ENCODE measurements at regions of chr12 and their contacts with region 1.

Region 1: DNA sequence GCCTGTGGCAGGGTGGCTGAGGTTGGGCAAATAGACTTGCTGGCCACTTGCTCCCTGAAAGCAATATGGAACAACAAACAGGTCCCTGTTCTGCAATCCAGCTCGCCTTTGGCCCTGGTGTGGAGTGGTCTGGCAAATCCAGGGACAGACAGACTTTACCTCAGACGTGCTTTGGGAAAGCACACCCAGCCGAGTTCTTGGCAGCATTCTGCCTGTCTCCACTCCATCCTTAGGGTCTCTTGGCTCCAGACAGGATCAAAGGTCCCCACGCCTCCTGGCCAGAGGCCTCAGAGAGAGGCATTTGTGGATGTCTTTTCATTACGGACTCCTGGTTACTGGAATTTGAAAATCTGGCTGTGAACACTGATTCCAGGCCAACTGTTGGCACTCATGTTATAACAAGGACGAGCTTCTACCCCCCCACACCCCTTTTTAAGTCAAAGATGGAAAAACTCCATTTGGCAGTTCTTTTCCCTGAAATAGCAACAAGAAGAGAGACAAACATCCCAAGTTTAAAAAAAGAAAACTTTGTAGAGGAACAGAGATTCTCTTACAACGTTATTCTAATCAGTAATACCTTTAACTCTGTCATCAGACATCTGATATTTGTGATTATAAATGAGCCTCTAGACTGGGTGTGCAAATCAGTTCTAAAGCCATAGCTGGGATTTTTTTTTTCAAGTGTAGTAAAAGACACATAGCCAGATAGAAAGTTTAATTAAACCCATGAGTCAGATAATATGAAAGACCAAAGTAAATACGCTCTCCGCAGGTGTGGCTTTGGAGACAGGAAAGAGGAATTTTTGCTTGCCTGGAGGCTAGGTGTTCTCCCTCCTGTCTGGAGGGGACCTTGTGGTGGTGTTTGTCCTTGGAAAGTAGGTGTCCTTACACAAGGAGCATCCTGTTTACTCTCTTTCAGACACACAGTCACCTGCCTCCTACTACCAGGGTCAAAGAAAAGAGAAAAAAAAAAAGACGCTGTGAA is 60.7 kb downstream of the GALNT8 start:
- DNase-seq: no peak
- ATAC-seq: no peak
- H3K4me3 ChIP-seq: no peak overlapping the region
- H3K4me3 Mint-ChIP-seq: no peak overlapping the region
- H3K27ac ChIP-seq: no peak overlapping the region
- H3K27ac Mint-ChIP-seq: no peak overlapping the region
- H3K4me1 ChIP-seq: no peaks in the 10 kb centered on the region
- H3K4me1 Mint-ChIP-seq: no peaks in the 10 kb centered on the region
- H3K27me3 ChIP-seq: no peaks in the 10 kb centered on the region
- H3K27me3 Mint-ChIP-seq: peaks cover 11% of the 10 kb centered on the region
- CTCF ChIP-seq: no peak

Region 2: DNA sequence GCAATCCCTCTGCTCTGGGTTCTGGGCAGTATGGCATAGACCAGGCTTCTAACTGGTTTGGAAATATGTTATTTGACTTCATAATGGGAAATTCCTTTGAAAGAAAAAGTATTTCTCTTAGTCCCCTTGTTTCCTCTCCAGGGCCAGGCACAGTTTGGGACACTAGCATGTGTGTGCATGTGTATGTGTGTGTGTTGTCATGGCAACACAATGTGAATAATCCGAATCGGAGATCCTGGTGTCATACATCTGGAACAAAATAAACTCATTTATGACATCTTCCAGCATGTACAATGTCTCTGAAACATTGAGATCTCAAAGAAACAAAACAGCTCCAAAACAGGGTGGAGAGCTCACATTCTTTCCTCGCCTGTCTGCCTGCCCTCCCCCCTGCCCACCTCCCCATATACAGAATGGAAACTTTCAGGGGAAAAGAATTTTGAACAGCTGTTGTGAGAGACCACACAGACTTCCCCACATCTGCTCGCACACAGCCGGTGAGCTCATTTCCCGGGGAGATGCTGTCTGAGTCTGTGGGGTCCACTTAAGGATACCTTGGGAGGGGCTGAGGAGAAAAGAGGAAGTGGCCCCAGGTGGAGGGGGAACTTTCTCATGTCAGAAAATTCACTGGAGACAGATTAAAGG is 852.3 kb before region 1 on chr12:
- CTCF ChIA-PET with region 1: no interaction called
- POLR2A ChIA-PET with region 1: no interaction called
- intact Hi-C with region 1: no loop called
- DNase-seq: no peak
- ATAC-seq: no peak
- H3K4me3 ChIP-seq: no peak overlapping the region
- H3K4me3 Mint-ChIP-seq: no peak overlapping the region
- H3K27ac ChIP-seq: no peak overlapping the region
- H3K27ac Mint-ChIP-seq: no peak overlapping the region
- H3K4me1 ChIP-seq: peaks cover 23% of the 10 kb centered on the region
- H3K4me1 Mint-ChIP-seq: peaks cover 53% of the 10 kb centered on the region
- H3K27me3 ChIP-seq: no peaks in the 10 kb centered on the region
- H3K27me3 Mint-ChIP-seq: no peaks in the 10 kb centered on the region
- CTCF ChIP-seq: no peak

Region 3: GRCh38 chr12:4069670-4070010 is 711.3 kb before region 1 on chr12:
- CTCF ChIA-PET with region 1: no interaction called
- POLR2A ChIA-PET with region 1: no interaction called
- intact Hi-C with region 1: loop called in 1 of 2 experiments (anchors 10 kb)
- DNase-seq: no peak
- ATAC-seq: no peak
- H3K4me3 ChIP-seq: no peak overlapping the region
- H3K4me3 Mint-ChIP-seq: no peak overlapping the region
- H3K27ac ChIP-seq: no peak overlapping the region
- H3K27ac Mint-ChIP-seq: no peak overlapping the region
- H3K4me1 ChIP-seq: no peaks in the 10 kb centered on the region
- H3K4me1 Mint-ChIP-seq: no peaks in the 10 kb centered on the region
- H3K27me3 ChIP-seq: no peaks in the 10 kb centered on the region
- H3K27me3 Mint-ChIP-seq: peaks cover 4% of the 10 kb centered on the region
- CTCF ChIP-seq: no peak

Region 4: DNA sequence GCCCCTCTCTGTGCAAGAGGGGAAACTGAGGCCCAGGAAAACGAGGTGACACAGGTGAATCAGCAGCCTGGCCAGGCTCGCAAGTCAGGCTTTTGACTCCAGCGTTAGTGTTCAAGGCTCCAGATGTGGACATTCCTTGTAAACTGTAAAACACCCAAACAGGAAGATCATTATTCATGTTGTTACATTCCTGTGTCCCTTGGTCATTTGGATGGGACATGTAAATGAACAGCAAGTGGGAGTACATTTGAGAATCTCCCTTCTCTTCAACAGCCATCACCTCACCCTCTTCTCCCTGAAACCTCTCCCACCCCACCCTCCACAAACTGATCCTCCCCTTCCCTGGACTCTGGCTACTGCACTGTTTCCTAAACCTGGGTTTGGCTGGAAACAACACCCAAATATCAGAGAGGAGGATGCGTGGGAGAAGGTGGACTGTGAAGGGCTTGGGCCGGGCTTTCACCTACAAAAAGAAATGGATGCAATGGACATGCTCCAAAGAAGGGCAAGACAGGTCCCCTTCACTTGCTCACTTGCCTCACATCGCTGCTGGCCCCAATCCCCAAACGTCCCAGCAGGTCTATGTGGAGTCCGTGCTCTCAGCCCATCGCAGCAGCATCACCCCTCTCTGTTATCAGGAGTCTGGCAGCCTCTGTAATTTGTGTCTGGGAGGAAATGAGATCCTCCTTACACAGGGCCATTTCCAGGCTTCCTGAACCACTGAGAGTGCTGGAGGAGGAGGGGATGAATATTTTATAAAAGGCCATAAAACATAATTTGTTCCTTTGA is 16.0 kb after region 1 on chr12:
- CTCF ChIA-PET with region 1: no interaction called
- POLR2A ChIA-PET with region 1: no interaction called
- intact Hi-C with region 1: no loop called
- DNase-seq: no peak
- ATAC-seq: no peak
- H3K4me3 ChIP-seq: no peak overlapping the region
- H3K4me3 Mint-ChIP-seq: no peak overlapping the region
- H3K27ac ChIP-seq: no peak overlapping the region
- H3K27ac Mint-ChIP-seq: no peak overlapping the region
- H3K4me1 ChIP-seq: no peaks in the 10 kb centered on the region
- H3K4me1 Mint-ChIP-seq: no peaks in the 10 kb centered on the region
- H3K27me3 ChIP-seq: no peaks in the 10 kb centered on the region
- H3K27me3 Mint-ChIP-seq: peaks cover 8% of the 10 kb centered on the region
- CTCF ChIP-seq: no peak

Region 5: DNA sequence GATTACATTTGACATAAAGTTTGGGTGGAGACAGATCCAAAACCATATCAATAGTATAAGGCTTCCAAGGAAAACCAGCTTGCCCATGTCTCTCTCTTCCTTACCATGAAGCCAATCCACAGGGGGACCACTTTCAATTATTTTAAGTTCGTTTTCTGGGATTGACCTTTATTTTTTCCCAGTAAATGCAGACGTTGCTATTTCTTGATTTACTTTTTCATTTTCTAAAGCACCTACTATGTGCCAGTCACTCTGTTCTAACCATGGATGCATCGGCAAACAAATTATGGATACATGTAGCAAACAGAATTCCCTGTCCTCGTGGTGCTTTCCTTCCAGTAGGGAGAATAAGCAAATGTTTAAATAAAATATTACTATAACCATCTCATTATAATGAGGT is 63.0 kb after region 1 on chr12:
- CTCF ChIA-PET with region 1: interaction called, 3 read pairs
- POLR2A ChIA-PET with region 1: no interaction called
- intact Hi-C with region 1: loop called in 1 of 2 experiments (anchors 2 kb)
- DNase-seq: no peak
- ATAC-seq: no peak
- H3K4me3 ChIP-seq: no peak overlapping the region
- H3K4me3 Mint-ChIP-seq: no peak overlapping the region
- H3K27ac ChIP-seq: no peak overlapping the region
- H3K27ac Mint-ChIP-seq: no peak overlapping the region
- H3K4me1 ChIP-seq: no peaks in the 10 kb centered on the region
- H3K4me1 Mint-ChIP-seq: no peaks in the 10 kb centered on the region
- H3K27me3 ChIP-seq: no peaks in the 10 kb centered on the region
- H3K27me3 Mint-ChIP-seq: peaks cover 2% of the 10 kb centered on the region
- CTCF ChIP-seq: no peak

Region 6: GRCh38 chr12:5022465-5023061 is 241.6 kb after region 1 on chr12:
- CTCF ChIA-PET with region 1: no interaction called
- POLR2A ChIA-PET with region 1: no interaction called
- intact Hi-C with region 1: no loop called
- DNase-seq: peak in 6 of 9 experiments; percentile 7 to 58 (median 32)
- ATAC-seq: peak; percentile 44
- H3K4me3 ChIP-seq: no peak overlapping the region
- H3K4me3 Mint-ChIP-seq: no peak overlapping the region
- H3K27ac ChIP-seq: no peak overlapping the region
- H3K27ac Mint-ChIP-seq: no peak overlapping the region
- H3K4me1 ChIP-seq: no peaks in the 10 kb centered on the region
- H3K4me1 Mint-ChIP-seq: no peaks in the 10 kb centered on the region
- H3K27me3 ChIP-seq: no peaks in the 10 kb centered on the region
- H3K27me3 Mint-ChIP-seq: peaks cover 26% of the 10 kb centered on the region
- CTCF ChIP-seq: peak; percentile 77